GM18951 (cell line): ENCODE measurements at regions of chr1 and their contacts with region 1.

Region 1: DNA sequence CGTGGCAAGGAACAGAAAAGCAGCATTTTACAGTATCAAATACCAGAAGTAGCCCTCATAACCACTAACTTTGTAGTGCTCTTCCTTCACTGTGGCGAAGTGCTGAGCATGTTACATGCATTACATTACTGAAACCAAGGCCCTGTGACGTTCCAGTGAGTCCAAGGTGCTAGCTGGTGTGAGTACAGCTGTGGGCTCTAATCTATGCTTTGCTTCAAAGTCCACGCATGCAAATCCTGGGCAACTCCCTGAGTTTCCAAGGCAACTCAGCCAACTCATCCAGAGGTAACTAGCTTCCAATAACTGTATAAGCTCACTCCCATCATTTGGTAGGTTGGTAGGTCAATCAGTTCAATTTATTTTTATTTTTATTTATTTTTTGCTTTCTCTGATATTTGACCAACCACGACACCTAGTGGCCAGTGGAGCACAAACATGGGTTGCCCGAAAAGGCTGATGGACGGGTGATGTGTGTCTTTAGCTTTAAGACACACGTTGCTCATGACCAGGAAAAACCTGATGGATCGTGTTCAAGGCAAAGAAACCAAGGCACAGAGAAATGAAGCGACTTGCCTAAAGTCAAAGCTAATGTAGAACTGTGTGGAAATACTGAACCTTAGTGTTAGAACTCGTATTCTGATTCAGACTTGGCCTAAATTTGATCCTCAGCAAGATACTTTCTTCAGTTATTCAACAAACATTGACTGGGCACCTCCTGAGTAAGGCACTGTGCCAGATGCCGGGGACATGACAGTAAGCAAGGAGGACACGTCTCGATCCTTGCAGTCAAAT is 73.0 kb downstream of the GNG12 start:
- POLR2A ChIP-seq: no peak

Region 2: DNA sequence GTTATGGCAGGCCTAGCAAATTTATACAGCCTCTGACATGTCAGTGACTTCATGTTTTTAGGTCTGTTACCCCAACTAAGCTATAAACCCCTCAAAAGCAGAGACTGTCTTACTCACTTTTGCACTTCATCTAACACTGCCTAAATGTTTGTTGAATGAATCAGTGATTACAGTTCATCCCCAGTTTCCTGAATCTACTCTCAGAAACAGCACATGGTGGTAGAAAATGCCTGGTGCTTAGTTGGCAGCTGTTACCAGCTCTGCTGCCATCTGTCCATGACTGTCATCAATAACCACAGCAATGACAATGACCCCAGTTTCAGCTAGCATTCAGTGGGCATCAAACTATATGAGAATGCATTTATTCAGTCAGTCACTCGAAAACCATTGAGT is 219.5 kb before region 1 on chr1:
- in situ Hi-C with region 1: loop called (anchors 10 kb)
- POLR2A ChIP-seq: no peak

Region 3: DNA sequence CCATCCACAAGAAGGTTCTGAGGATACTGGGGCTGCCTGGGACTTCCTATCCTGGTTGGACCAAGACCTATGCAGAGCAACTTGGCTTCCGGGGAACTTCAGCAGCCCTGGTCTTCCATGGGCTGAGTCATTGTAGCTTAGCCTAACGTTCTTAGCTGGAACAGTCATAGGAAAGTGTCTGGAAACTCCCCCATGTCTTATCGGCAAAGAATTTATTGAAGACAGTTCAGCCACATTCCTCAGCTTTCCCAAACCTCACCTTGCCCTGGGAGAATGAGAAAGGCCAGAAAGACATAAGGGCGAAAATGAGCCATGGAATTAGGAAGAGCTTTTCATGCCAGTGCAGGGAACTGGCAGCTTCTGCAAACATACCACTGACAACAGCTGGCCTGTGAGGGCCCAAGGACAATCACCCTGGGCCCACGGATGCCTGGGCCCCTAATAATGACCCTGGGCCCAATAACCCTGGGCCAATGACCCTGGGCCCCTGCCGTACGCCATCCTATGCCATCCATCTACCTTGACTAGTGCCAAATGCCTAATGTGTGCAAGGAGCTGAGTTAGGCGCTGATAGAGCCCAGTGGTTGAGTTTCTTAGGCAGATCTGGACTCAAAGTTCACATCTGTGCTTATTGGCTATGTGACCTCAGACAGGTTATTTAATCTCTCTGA is 189.6 kb before region 1 on chr1:
- in situ Hi-C with region 1: loop called (anchors 10 kb)
- POLR2A ChIP-seq: no peak